MCF 10A (cell line): ENCODE measurements at regions of chr6 and their contacts with region 1.

Region 1: DNA sequence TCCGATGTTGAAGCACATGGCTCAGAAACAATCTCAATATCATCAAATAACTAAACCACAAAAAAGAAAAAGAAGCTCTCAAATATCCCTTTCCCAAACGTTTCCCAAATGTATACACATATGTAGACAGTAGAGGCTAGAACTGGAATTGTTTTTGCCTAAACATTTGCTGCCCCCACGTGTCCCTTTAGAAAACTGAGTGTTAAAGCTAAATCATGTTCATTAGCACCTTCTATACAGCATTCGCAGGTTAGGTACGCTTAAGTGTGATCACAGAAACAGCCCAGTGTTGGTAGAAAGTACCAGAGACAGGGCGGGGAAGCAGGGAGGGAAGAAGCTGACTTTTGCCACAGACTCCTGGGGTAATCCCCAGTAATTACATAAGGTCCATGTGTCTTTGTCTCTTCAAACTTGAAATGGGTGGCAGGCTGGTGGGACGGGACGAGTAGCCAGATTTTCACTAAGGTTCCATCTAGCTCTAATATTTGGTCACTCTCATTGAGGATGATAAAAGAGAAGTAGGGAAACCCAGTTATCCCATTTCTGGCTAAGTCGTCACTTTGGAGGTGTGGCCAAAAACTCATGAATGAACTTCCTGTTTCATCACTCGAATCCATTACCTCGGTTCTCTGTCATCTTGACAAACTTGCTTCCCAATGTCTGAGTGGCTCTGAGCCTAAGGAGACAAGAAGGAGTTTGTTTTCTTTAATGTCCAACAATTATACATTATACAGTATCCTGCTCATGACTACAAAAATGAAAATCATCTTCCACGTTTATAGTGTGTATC is 15.0 kb upstream of the TFAP2A start:
- DNase-seq: peak; percentile 88
- H3K4me3 Mint-ChIP-seq: no peak overlapping the region
- H3K27ac Mint-ChIP-seq: peak overlapping the region; percentile 92
- H3K4me1 Mint-ChIP-seq: peaks cover 40% of the 10 kb centered on the region
- H3K27me3 Mint-ChIP-seq: no peaks in the 10 kb centered on the region
- CTCF ChIP-seq: peak; percentile 67

Region 2: GRCh38 chr6:8435160-8435852 is 1994.5 kb before region 1 on chr6 and contains the start of gene SLC35B3:
- CTCF ChIA-PET with region 1: no interaction called
- POLR2A ChIA-PET with region 1: interaction called, 3 read pairs
- intact Hi-C with region 1: loop called (anchors 10 kb)
- DNase-seq: peak; percentile 95
- H3K4me3 Mint-ChIP-seq: peak within 1 kb of the TSS; percentile 95
- H3K27ac Mint-ChIP-seq: peak within 1 kb of the TSS; percentile 98
- H3K4me1 Mint-ChIP-seq: peaks cover 25% of the 10 kb centered on the region
- H3K27me3 Mint-ChIP-seq: no peaks in the 10 kb centered on the region
- CTCF ChIP-seq: no peak
- total RNA-seq, gene SLC35B3: 22.0 and 27.4 TPM in 2 replicates

Region 3: GRCh38 chr6:8707956-8708772 is 1721.7 kb before region 1 on chr6:
- CTCF ChIA-PET with region 1: interaction called, 24 read pairs
- POLR2A ChIA-PET with region 1: interaction called, 3 read pairs
- intact Hi-C with region 1: loop called (anchors 1 kb)
- DNase-seq: peak; percentile 75
- H3K4me3 Mint-ChIP-seq: peak overlapping the region; percentile 63
- H3K27ac Mint-ChIP-seq: peak overlapping the region; percentile 47
- H3K4me1 Mint-ChIP-seq: peaks cover 9% of the 10 kb centered on the region
- H3K27me3 Mint-ChIP-seq: no peaks in the 10 kb centered on the region
- CTCF ChIP-seq: peak; percentile 48

Region 4: DNA sequence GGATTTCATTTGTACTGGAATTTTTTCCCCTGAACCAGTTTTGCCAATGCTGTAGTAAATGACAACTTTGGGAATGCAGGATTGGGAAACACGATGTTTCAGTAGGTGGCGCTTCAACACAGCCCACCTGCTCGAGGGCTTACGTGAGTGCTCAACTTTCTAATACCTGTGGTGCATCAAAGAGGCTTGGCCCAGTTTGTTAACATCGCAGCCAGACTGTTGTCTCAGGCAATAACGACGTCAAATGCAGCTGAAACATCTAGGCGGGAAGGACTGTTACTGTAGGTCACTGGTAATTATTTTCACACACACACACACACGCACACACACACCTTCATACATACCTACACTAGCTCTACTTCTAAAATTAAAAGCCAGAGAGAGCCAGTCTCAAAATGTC is 1179.0 kb before region 1 on chr6:
- CTCF ChIA-PET with region 1: interaction called, 11 read pairs
- POLR2A ChIA-PET with region 1: interaction called, 14 read pairs
- intact Hi-C with region 1: loop called (anchors 1 kb)
- DNase-seq: peak; percentile 78
- H3K4me3 Mint-ChIP-seq: no peak overlapping the region
- H3K27ac Mint-ChIP-seq: no peak overlapping the region
- H3K4me1 Mint-ChIP-seq: no peaks in the 10 kb centered on the region
- H3K27me3 Mint-ChIP-seq: no peaks in the 10 kb centered on the region
- CTCF ChIP-seq: peak; percentile 69

Region 5: DNA sequence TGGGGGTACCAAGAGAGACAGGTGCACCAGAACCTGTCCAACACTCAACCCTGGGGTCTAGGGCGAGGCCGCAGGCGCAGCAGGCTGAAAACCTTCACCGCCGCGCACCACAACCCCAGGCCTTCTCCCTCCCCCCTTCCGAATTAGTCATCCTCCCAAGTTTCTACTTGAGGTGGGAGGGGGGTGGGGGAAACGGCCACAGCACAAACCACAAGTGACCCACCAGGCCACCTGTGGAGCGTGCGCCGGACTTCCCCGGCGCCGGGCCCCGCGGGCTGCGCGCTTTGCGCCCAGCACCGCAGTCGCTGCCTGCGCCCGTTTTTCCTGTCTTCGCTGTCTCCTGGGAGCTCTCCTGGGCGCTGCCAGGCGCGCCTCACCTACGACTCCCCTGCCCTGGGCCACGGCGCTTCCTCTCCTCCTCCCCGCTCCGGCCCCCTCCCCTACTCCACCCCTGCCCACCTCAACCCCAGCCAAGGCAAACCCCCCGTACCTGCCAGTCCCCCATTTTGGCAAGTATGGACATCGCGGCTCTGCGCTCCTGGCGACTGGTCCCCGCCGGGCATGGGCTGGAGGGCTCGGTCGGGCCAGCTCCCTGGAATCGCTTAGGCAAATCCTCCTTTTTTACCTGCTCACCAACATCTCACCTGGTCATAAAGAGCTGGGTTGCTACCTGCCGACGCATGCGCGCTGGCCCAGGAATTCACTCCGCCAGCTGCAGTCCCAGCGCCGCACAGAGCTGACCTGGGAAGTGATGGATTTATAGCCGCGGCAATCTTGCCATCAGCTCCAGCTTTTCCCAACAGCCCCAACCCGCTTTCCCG is 10.7 kb before region 1 on chr6:
- CTCF ChIA-PET with region 1: interaction called, 50 read pairs
- POLR2A ChIA-PET with region 1: interaction called, 763 read pairs
- intact Hi-C with region 1: loop called (anchors 2 kb)
- DNase-seq: peak; percentile 96
- H3K4me3 Mint-ChIP-seq: peak overlapping the region; percentile 94
- H3K27ac Mint-ChIP-seq: peak overlapping the region; percentile 99
- H3K4me1 Mint-ChIP-seq: peaks cover 24% of the 10 kb centered on the region
- H3K27me3 Mint-ChIP-seq: no peaks in the 10 kb centered on the region
- CTCF ChIP-seq: no peak

Region 6: GRCh38 chr6:10465629-10466504 is 36.0 kb after region 1 on chr6:
- CTCF ChIA-PET with region 1: interaction called, 16 read pairs
- POLR2A ChIA-PET with region 1: interaction called, 6 read pairs
- intact Hi-C with region 1: loop called (anchors 5 kb)
- DNase-seq: peak; percentile 69
- H3K4me3 Mint-ChIP-seq: no peak overlapping the region
- H3K27ac Mint-ChIP-seq: no peak overlapping the region
- H3K4me1 Mint-ChIP-seq: peaks cover 13% of the 10 kb centered on the region
- H3K27me3 Mint-ChIP-seq: no peaks in the 10 kb centered on the region
- CTCF ChIP-seq: peak; percentile 73